ENCODE measurements at regions of chr17 and their contacts with region 1.

Region 1: GRCh38 chr17:28612936-28613872 is 781 bp downstream of the RSKR start:
- DNase-seq: peak; percentile 39
- CTCF ChIP-seq: peak; percentile 70

Region 2: DNA sequence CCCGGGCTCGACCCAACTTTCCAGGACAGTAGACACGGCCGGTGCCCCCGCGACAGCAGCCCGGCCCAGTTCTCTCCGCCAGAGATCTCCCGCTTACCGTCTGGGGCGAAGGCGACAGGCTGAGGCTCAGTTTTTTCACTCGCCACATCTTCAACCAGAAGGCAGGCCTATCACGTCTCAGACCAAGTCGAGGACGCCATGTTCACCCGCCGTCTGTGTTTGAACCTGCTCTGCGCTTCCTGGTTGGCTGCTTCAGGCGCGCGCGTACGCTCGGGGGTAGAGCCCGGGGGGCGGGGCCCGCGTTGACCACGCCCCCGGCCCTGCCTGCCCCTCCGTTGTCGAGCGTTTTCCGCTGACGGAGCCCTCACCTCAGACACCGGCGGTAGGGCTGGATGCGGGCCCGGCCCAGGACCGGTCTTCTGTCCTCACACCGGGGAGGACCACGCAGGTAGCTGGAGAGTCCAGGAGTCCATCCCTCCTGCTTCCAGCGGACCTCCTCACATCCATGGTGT is 14.3 kb before region 1 on chr17 and contains the start of gene SPAG5:
- CTCF ChIA-PET with region 1: interaction called, 23 read pairs
- POLR2A ChIA-PET with region 1: interaction called, 3 read pairs
- DNase-seq: peak; percentile 100
- CTCF ChIP-seq: no peak

Region 3: GRCh38 chr17:28623696-28624095 is 10.5 kb after region 1 on chr17:
- CTCF ChIA-PET with region 1: interaction called, 42 read pairs
- POLR2A ChIA-PET with region 1: no interaction called
- DNase-seq: no peak
- CTCF ChIP-seq: no peak

Region 4: GRCh38 chr17:28634206-28634856 is 21.1 kb after region 1 on chr17:
- CTCF ChIA-PET with region 1: interaction called, 11 read pairs
- POLR2A ChIA-PET with region 1: interaction called, 5 read pairs
- DNase-seq: no peak
- CTCF ChIP-seq: no peak